ENCODE measurements at regions of chr9 and their contacts with region 1.

Region 1: DNA sequence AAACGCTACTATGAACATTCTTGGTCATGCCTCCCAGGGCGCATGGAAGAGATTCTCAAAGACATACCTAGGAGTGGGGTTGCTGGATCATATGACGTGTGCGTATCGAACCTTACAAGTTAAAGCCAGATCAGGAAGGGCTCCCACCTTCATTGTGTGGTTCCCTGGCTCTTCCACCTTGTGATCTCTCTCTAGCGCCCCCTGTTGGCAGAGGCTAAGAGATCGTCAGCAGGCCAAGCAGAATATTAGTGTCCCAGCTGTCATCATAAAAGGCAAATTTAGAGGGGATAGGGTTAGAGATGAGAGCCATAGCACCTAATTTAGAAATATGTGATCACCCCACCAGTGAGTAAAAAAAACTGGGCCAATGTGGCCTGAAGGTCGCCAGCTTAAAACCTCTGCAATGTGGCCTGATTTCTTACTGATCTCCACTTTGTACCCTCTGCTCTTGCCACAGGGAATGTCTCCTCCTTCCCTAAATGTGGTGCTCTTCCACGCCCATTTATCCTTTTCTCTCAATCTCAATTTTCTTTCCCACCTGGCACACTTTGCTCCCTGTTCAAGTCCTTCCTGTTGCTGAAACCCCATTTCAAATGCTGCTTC is 91.7 kb upstream of the SHB start:
- DNase-seq: no peak
- H3K4me3 ChIP-seq: no peak overlapping the region
- H3K27ac ChIP-seq: no peak overlapping the region
- H3K4me1 ChIP-seq: no peaks in the 10 kb centered on the region
- H3K27me3 ChIP-seq: no peaks in the 10 kb centered on the region
- CTCF ChIP-seq: peak; percentile 73 to 88

Region 2: DNA sequence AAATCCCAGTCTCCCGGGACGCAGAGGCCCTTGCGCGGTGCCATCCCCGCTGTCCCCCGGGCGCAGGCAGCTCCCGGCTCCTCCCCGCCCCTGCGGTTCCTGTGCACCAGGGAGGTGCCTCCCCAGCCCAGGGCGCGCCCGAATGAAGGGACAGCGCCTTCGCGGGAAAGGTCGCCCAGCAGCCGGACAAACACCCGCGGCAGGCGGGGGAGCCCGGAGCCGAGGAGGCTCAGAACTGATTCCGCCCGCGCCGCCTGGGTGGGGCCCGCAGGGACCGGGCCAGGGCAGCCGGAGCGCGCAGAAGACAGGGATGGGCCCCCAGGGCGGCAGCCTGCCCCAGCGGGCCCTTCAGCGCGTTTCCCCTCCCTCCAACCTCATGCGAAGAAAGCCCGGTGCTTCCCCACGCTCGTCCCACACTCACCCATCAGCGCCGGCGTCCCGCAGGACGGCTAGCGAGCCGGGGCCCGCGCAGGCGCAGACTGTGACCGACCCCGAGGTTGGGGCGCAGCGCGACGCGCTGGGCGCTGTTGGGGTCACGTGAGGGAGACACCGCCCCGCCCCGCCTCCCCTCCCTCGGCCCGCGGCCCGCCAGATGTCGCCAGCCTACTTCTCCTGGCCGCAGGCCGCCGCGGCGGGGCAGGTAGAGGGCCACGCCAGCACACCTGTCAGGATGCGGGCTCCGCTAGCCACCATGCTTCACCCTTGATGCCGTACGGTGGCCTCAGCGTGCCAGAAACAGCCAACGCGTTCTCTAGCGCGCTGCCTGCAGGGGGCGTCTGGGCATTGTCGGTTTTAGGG is 256.9 kb before region 1 on chr9 and contains the start of gene SLC25A51:
- CTCF ChIA-PET with region 1: no interaction called
- dilution Hi-C with region 1: no loop called
- in situ Hi-C with region 1: loop called (anchors 25 kb)
- intact Hi-C with region 1: no loop called
- DNase-seq: peak; percentile 94
- H3K4me3 ChIP-seq: peak within 1 kb of the TSS; percentile 60 to 83 (median 78)
- H3K27ac ChIP-seq: peak within 1 kb of the TSS; percentile 67
- H3K4me1 ChIP-seq: peaks cover 25% of the 10 kb centered on the region
- H3K27me3 ChIP-seq: no peaks in the 10 kb centered on the region
- CTCF ChIP-seq: peak; percentile 92 to 98
- total RNA-seq, gene SLC25A51: 30.0 to 78.0 TPM

Region 3: GRCh38 chr9:37938121-37938891 is 222.4 kb before region 1 on chr9:
- CTCF ChIA-PET with region 1: no interaction called
- dilution Hi-C with region 1: loop called (anchors 10 kb)
- in situ Hi-C with region 1: no loop called
- intact Hi-C with region 1: no loop called
- DNase-seq: peak; percentile 65
- H3K4me3 ChIP-seq: no peak overlapping the region
- H3K27ac ChIP-seq: no peak overlapping the region
- H3K4me1 ChIP-seq: peaks cover 48% of the 10 kb centered on the region
- H3K27me3 ChIP-seq: no peaks in the 10 kb centered on the region
- CTCF ChIP-seq: no peak

Region 4: DNA sequence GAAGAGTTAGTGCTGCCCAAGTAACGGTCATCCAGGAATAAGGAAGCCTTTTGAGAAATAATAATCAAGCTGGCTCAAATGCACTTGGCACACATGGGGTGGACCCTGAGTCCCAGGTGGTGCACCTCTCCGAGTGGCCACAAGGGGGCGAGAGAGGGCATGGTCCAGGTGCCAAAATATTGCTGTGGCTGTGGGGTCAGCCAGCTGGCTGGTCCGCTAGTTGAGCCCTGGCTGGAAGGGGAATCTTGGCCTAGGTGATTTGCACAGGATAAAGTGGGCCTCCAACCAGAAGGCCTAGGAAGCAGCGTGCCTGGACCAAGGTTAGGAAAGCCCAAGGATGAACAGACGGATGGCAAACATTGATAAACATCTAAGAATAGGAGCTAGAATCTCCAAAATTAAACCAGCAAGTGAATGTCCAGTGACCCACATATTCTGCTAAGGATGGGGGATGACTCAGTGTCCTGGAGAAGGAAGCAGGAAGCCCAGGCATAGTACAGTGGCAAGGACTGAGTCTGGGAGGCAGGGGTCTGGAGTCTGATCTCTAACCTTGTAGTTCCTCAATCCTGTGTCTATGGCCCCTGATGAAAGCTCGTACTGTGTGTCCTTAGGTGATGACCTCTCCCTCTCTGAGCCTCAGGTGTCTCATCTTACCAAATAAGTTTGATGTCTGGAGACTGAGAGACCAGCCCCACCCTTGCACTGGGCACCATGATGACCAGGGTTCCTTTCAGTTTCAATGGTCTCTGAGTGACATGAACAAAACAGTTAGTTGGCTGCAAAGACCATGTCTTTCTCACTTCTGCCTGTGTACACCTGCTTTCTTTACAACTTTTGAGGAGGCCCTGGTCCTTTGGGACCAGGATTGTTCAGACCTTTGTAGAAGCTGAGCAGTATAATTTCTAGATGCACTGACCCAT is 72.4 kb before region 1 on chr9:
- CTCF ChIA-PET with region 1: no interaction called
- dilution Hi-C with region 1: no loop called
- in situ Hi-C with region 1: no loop called
- intact Hi-C with region 1: loop called (anchors 1 kb)
- DNase-seq: peak; percentile 32
- H3K4me3 ChIP-seq: no peak overlapping the region
- H3K27ac ChIP-seq: no peak overlapping the region
- H3K4me1 ChIP-seq: peaks cover 1% of the 10 kb centered on the region
- H3K27me3 ChIP-seq: no peaks in the 10 kb centered on the region
- CTCF ChIP-seq: peak; percentile 93 to 98

Region 5: GRCh38 chr9:38263532-38263931 is 102.8 kb after region 1 on chr9:
- CTCF ChIA-PET with region 1: no interaction called
- dilution Hi-C with region 1: no loop called
- in situ Hi-C with region 1: no loop called
- intact Hi-C with region 1: loop called (anchors 5 kb)
- DNase-seq: peak; percentile 31
- H3K4me3 ChIP-seq: no peak overlapping the region
- H3K27ac ChIP-seq: no peak overlapping the region
- H3K4me1 ChIP-seq: no peaks in the 10 kb centered on the region
- H3K27me3 ChIP-seq: no peaks in the 10 kb centered on the region
- CTCF ChIP-seq: peak; percentile 41 to 61